ENCODE measurements at regions of chr9 and their contacts with region 1.

Region 1: DNA sequence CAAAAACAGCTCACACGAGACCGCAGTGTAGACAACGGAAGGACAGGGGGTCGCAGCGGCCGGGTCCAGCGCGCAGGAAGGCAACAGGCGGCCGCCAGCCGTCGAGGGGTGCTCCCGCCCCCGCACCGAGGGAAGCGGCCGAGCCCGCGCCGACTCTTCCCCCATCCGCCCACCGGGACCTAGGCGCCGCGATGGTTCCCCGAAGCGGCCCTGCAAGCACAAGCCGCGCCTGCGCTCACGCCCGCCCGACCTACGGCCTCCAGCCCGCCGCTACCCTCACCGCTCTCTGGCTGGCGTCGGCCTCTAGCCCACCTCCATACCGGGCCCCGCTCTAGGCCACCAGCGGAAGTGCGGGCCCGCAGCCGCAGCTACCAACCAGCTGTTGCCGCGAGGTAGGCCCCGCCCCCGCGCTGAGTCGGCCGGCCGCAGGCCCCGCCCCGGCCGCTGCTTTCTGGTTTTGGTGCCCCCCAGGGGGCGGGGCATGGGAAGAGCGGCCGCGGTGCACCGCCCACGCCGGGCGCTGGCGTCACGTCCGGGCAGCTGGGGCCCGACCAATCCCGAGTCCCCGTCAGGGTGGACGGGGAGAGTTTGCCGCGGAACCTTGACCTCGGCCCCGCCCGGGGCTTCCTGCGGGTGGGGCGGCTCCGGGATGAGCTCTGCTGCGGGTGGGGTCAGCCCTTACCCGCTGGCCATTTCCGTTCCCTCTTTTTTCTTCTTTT is at the start of gene SETX:
- DNase-seq: peak; percentile 99
- H3K4me3 ChIP-seq: peak within 1 kb of the TSS; percentile 77 to 92
- H3K27ac ChIP-seq: peak within 1 kb of the TSS; percentile 88 to 90
- H3K4me1 ChIP-seq: peaks cover 12 to 17% of the 10 kb centered on the region in 2 experiments
- H3K27me3 ChIP-seq: no peaks in the 10 kb centered on the region
- CTCF ChIP-seq: no peak
- EP300 ChIP-seq: no peak; a peak in 1 of 4 replicates
- RAD21 ChIP-seq: no peak
- polyA plus RNA-seq, gene SETX: 12.3 and 15.0 TPM in 2 replicates

Region 2: DNA sequence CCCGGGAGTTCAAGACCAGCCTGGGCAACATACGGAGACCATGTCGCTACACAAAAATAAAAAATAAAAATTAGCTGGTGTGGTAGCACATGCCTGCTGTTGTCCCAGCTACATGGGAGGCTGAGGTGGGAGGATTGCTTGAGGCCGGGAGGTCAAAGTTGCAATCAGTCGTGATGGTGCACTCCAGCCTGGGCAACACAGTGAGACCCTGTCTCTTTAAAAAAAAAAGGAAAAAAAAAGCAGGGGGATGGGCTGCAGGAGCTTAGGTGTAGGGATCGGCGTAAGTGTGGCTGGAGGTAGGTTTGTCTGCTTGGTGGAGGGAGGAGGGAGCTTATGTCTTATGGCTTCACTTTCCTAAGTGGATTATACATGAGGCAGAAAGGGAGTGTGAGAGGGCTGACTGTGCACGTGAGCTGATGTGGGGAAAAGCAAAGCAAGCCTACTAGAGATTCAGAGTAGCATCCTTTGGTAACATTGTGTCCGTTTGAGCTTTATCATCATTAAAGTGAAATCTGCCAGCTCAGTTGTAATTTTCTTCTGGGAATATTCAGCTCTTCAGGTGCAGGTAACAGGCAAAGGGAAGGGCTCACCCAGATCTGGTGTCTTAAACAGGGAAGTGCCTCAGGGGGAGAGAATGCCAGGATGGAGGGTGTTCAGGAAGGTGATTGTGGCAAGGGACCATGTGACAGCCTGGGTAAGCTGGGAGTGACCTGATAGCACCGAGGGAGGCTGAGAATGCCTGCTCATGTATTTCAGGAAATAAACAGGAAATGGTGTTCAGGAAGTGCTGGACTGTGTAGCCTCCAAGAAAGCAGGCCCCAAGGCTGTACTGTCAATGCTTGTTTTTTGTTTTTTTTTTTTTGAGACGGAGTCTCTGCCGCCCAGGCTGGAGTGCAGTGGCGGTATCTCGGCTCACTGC is 17.6 kb after region 1 on chr9:
- CTCF ChIA-PET with region 1: no interaction called
- POLR2A ChIA-PET with region 1: interaction called, 13 read pairs
- DNase-seq: peak; percentile 58
- H3K4me3 ChIP-seq: no peak overlapping the region
- H3K27ac ChIP-seq: peak overlapping the region in 1 of 2 experiments; percentile 8; a peak in 1 of 4 replicates
- H3K4me1 ChIP-seq: peaks cover 0 to 5% of the 10 kb centered on the region in 2 experiments; a peak in 1 of 4 replicates
- H3K27me3 ChIP-seq: no peaks in the 10 kb centered on the region
- CTCF ChIP-seq: no peak
- EP300 ChIP-seq: no peak
- RAD21 ChIP-seq: no peak

Region 3: DNA sequence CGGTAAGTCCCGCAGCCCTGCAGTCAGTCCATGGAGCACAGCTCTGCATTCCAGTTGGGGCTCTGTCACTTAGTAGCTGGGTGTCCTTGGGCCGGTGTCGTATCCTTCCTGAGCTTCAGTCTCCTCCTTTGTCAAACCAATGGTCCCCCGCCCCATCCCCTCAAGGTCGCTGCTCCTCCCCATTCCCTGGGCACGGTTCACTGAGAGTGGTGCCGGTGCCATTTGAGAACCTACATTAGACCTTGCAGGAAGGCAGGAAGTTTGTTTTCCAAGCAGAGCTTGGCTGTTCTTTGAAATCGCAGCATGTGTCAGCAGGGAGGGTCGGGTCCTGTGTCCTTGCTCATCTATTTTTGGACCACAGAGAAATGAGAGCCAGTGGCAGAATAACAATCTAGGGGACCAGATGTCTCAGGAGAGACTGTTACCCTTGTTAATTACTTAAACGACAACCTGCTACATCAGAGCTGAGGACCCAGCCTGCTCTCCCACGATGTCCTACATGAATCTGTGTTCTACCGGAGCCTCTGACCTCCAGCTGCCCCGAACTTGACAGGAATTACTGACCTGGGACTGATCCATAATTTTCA is 205.9 kb after region 1 on chr9:
- CTCF ChIA-PET with region 1: no interaction called
- POLR2A ChIA-PET with region 1: no interaction called
- DNase-seq: peak; percentile 47
- H3K4me3 ChIP-seq: no peak overlapping the region
- H3K27ac ChIP-seq: peak overlapping the region in 1 of 2 experiments; percentile 34; a peak in 2 of 4 replicates
- H3K4me1 ChIP-seq: peaks cover 0 to 16% of the 10 kb centered on the region in 2 experiments; a peak in 1 of 4 replicates
- H3K27me3 ChIP-seq: no peaks in the 10 kb centered on the region; the same call in 1 of the 2 replicates
- CTCF ChIP-seq: no peak
- EP300 ChIP-seq: no peak
- RAD21 ChIP-seq: no peak

Measured in SK-N-SH (cell line).